Naive thymus-derived CD4-positive, alpha-beta T cell (primary cell): ENCODE measurements at regions of chr6 and their contacts with region 1.

Region 1: DNA sequence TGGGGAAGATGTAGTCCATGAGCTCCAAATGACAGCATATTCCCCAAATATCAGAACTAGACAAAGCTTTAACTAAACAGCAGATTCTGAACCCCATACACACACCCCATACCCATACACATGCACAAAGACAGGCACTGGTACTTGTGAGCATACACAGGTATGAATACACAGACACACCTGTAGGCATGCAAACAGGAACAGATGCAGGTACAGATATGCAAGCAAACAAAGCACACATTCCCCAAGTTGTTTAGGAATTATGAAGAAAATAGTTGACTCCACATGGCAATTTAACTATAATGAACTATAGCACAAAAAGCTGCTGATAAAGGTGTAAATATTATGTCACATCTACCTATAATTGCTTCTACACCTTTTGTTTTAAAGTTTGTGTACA is 16.7 kb downstream of the GOPC start:
- DNase-seq: no peak
- ATAC-seq: no peak
- H3K4me3 ChIP-seq: no peak overlapping the region
- H3K4me3 Mint-ChIP-seq: no peak overlapping the region
- H3K27ac ChIP-seq: no peak overlapping the region
- H3K27ac Mint-ChIP-seq: peak overlapping the region in 2 of 9 donors; percentile 9 to 50
- H3K4me1 ChIP-seq: no peaks in the 10 kb centered on the region
- H3K4me1 Mint-ChIP-seq: peaks cover 2 to 77% (median 54%) of the 10 kb centered on the region in 7 donors
- H3K27me3 ChIP-seq: no peaks in the 10 kb centered on the region
- H3K27me3 Mint-ChIP-seq: no peaks in the 10 kb centered on the region

Region 2: GRCh38 chr6:117573006-117573680 is 12.5 kb before region 1 on chr6:
- CTCF ChIA-PET with region 1: no interaction called
- POLR2A ChIA-PET with region 1: no interaction called
- intact Hi-C with region 1: loop called in 1 of 2 experiments (anchors 1 kb)
- DNase-seq: no peak
- ATAC-seq: no peak
- H3K4me3 ChIP-seq: no peak overlapping the region
- H3K4me3 Mint-ChIP-seq: no peak overlapping the region
- H3K27ac ChIP-seq: no peak overlapping the region
- H3K27ac Mint-ChIP-seq: peak overlapping the region in 3 of 9 donors; percentile 14 to 46 (median 29)
- H3K4me1 ChIP-seq: no peaks in the 10 kb centered on the region
- H3K4me1 Mint-ChIP-seq: peaks cover 0 to 11% (median 3%) of the 10 kb centered on the region in 7 donors
- H3K27me3 ChIP-seq: no peaks in the 10 kb centered on the region
- H3K27me3 Mint-ChIP-seq: no peaks in the 10 kb centered on the region